ENCODE measurements at regions of chr6 and their contacts with region 1.

Region 1: GRCh38 chr6:97059473-97059872 is 134.9 kb downstream of the KLHL32 start:
- DNase-seq: no peak
- ATAC-seq: no peak
- H3K4me3 ChIP-seq: no peak overlapping the region
- H3K27ac ChIP-seq: no peak overlapping the region
- H3K4me1 ChIP-seq: no peaks in the 10 kb centered on the region
- H3K27me3 ChIP-seq: no peaks in the 10 kb centered on the region
- CTCF ChIP-seq: peak in 6 of 7 experiments; percentile 37 to 61 (median 56)
- POLR2A ChIP-seq: no peak

Region 2: DNA sequence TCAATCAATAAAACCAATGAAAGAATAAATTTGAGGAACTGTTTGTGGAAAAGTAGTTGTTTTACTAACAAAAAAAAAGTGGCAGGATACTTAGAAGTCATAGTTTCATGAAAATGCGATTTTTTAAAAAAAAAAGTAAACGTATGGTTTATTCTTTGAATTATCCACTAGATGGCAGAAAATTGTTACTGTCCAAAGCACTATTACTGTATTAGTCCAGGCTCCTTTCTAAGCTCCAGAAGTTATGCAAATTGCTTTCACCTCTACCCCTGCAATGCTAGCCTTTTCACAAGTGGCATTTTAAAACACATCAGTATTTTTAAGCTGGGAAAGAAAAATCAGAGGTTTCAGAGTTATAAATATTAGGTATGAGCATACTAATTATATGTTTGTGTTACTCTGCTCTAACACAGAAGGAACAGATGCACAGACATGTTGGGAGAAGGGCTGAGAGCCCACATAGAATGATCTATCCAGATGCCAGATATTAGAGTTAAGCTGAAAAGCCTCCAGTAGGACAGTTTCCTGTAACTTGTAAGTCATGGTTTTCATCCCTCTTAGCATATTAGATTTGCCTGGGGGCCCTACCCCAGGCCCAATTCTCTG is 432.6 kb before region 1 on chr6:
- intact Hi-C with region 1: loop called (anchors 5 kb)
- DNase-seq: no peak
- ATAC-seq: peak; percentile 73
- H3K4me3 ChIP-seq: no peak overlapping the region
- H3K27ac ChIP-seq: no peak overlapping the region
- H3K4me1 ChIP-seq: no peaks in the 10 kb centered on the region
- H3K27me3 ChIP-seq: no peaks in the 10 kb centered on the region
- CTCF ChIP-seq: peak; percentile 18 to 67 (median 56)
- POLR2A ChIP-seq: no peak

Region 3: DNA sequence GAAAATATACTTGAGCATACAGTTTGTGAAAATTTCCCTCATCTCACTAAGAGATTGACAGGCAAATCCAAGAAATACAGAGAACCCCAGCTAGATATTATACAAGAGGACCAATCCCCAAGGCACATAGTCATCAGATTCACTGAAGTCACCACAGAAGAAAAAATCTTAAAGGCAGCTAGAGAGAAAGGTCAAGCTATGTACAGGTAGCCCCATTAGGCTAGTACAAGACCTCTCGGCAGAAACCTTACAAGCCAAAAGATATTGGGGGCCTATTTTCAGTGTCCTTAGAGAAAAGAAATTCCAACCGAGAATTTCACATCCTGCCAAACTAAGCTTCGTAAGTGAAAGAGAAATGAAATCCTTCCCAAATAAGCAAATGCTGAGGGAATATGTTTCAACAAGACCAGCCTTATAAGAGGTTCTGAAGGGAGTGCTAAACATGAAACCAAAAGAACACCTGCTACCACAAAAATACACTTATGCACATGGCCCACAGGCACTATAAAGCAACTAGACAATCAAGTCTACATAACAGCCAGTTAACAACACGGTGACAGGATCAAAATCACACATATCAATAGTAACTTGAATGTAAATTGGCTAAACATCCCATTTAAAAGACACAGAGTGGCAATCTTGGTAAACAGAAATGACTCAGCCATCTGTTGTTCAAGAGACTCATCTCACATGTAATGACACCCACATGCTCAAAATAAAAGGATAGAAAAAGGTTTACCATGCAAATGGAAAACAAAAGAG is 400.2 kb before region 1 on chr6:
- intact Hi-C with region 1: no loop called
- DNase-seq: no peak
- ATAC-seq: no peak
- H3K4me3 ChIP-seq: no peak overlapping the region
- H3K27ac ChIP-seq: no peak overlapping the region
- H3K4me1 ChIP-seq: no peaks in the 10 kb centered on the region
- H3K27me3 ChIP-seq: no peaks in the 10 kb centered on the region
- CTCF ChIP-seq: no peak
- POLR2A ChIP-seq: no peak

Region 4: GRCh38 chr6:96907498-96907897 is 152.0 kb before region 1 on chr6:
- intact Hi-C with region 1: loop called (anchors 10 kb)
- DNase-seq: no peak
- ATAC-seq: no peak
- H3K4me3 ChIP-seq: no peak overlapping the region
- H3K27ac ChIP-seq: no peak overlapping the region
- H3K4me1 ChIP-seq: no peaks in the 10 kb centered on the region
- H3K27me3 ChIP-seq: no peaks in the 10 kb centered on the region
- CTCF ChIP-seq: no peak
- POLR2A ChIP-seq: no peak

Region 5: GRCh38 chr6:97361286-97361685 is 301.8 kb after region 1 on chr6:
- intact Hi-C with region 1: no loop called
- DNase-seq: no peak
- ATAC-seq: no peak
- H3K4me3 ChIP-seq: no peak overlapping the region
- H3K27ac ChIP-seq: no peak overlapping the region
- H3K4me1 ChIP-seq: no peaks in the 10 kb centered on the region
- H3K27me3 ChIP-seq: no peaks in the 10 kb centered on the region
- CTCF ChIP-seq: no peak
- POLR2A ChIP-seq: no peak

Region 6: GRCh38 chr6:97501853-97502252 is 442.4 kb after region 1 on chr6:
- intact Hi-C with region 1: no loop called
- DNase-seq: no peak
- ATAC-seq: no peak
- H3K4me3 ChIP-seq: no peak overlapping the region
- H3K27ac ChIP-seq: no peak overlapping the region
- H3K4me1 ChIP-seq: no peaks in the 10 kb centered on the region
- H3K27me3 ChIP-seq: no peaks in the 10 kb centered on the region
- CTCF ChIP-seq: no peak
- POLR2A ChIP-seq: no peak

Measured in body of pancreas (tissue), 4 donors.